ENCODE measurements at regions of chr14 and their contacts with region 1.

Region 1: DNA sequence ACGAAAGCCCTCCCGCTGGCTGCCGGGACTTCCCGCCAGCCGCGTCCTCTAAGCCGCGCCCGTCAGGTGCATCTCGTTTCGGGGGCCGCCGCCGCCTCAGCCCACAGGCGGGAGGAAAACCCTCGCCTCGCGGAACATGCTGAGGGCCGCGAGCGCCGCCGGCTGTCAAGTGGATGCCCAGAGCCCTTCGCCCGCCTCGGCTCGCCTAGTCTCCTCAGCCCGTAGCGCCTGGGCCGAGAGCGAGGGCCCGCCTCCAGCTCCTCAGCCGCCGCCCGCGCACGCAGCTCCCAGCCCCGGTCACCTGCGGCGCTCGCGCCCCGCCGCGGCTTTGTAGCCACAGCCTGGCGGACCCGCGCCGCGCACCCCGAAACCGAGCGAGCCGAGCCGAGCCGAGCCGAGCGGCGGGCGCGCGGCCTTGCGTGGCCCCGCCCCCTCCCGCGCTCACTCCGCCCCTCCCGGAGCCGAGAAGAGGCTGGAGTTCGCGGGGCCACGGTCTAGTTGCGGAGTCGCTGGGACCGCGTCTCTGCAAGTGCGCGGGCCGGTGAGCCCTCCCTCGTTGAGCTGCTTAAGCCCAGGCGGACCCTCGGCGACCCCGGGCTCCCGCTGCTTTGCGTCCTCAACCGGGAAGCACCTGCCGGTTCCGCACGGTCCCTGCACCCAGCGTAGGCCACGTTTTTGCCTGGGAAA is at the start of gene EML5:
- DNase-seq: peak; percentile 78 to 89 (median 86)
- ATAC-seq: peak; percentile 93
- H3K4me3 ChIP-seq: peak within 1 kb of the TSS; percentile 87
- H3K4me3 Mint-ChIP-seq: peak within 1 kb of the TSS; percentile 83 to 93 (median 91)
- H3K27ac ChIP-seq: peak within 1 kb of the TSS; percentile 78
- H3K27ac Mint-ChIP-seq: peak within 1 kb of the TSS; percentile 42 to 94 (median 77)
- H3K4me1 ChIP-seq: peaks cover 7 to 10% of the 10 kb centered on the region in 2 donors
- H3K4me1 Mint-ChIP-seq: peaks cover 8 to 29% (median 19%) of the 10 kb centered on the region in 7 donors
- H3K27me3 ChIP-seq: no peaks in the 10 kb centered on the region
- H3K27me3 Mint-ChIP-seq: peaks cover 0 to 36% (median 0%) of the 10 kb centered on the region in 5 donors
- total RNA-seq, gene EML5: 1.3 to 6.4 (median 5.4) TPM

Region 2: GRCh38 chr14:88060576-88060975 is 732.1 kb before region 1 on chr14:
- CTCF ChIA-PET with region 1: no interaction called
- POLR2A ChIA-PET with region 1: no interaction called
- intact Hi-C with region 1: no loop called
- DNase-seq: no peak
- ATAC-seq: no peak
- H3K4me3 ChIP-seq: no peak overlapping the region
- H3K4me3 Mint-ChIP-seq: no peak overlapping the region
- H3K27ac ChIP-seq: no peak overlapping the region
- H3K27ac Mint-ChIP-seq: no peak overlapping the region
- H3K4me1 ChIP-seq: no peaks in the 10 kb centered on the region
- H3K4me1 Mint-ChIP-seq: no peaks in the 10 kb centered on the region
- H3K27me3 ChIP-seq: no peaks in the 10 kb centered on the region
- H3K27me3 Mint-ChIP-seq: peaks cover 6 to 10% (median 8%) of the 10 kb centered on the region in 5 donors

Region 3: GRCh38 chr14:88492272-88493089 is 300.2 kb before region 1 on chr14:
- CTCF ChIA-PET with region 1: no interaction called
- POLR2A ChIA-PET with region 1: no interaction called
- intact Hi-C with region 1: loop called in 1 of 2 experiments (anchors 2 kb)
- DNase-seq: peak in 8 of 9 donors; percentile 36 to 73 (median 58)
- ATAC-seq: peak; percentile 90
- H3K4me3 ChIP-seq: no peak overlapping the region
- H3K4me3 Mint-ChIP-seq: no peak overlapping the region
- H3K27ac ChIP-seq: no peak overlapping the region
- H3K27ac Mint-ChIP-seq: no peak overlapping the region
- H3K4me1 ChIP-seq: no peaks in the 10 kb centered on the region
- H3K4me1 Mint-ChIP-seq: peaks cover 0 to 7% (median 0%) of the 10 kb centered on the region in 7 donors
- H3K27me3 ChIP-seq: no peaks in the 10 kb centered on the region
- H3K27me3 Mint-ChIP-seq: peaks cover 0 to 6% (median 4%) of the 10 kb centered on the region in 5 donors

Region 4: DNA sequence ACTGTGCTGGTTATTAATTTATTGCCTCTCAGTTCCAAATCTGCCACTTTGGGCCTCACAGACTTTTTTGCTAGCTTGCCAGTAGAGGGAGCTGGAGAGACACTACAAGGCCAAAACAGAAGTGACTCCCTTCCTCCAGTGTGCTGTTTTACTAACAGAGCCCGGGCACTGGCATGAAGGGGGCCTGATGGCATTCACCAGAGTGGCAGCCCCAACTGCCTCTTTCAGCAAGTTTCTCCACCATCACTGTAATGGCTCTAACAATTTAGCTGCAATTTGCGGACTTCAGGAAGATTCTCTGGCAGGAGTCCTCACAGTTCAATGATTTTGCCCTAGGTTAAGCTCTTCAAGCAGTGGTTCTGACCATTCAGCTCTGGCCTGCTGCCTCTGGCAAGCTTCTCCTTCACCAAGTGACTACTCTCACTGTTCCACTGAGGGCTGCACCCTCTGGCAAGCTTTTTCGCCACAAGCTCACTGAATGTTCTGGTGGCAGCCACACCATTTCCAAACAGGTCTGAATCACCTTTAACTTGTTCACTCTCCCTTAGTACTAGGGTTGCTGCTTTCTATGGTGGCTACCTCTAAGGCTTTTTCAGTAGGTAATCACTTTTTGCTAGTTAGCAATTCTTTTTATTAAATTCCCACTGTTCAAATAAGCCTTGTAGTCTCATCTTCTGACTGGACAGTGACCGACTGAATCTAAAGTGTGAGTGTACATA is 125.0 kb before region 1 on chr14:
- CTCF ChIA-PET with region 1: no interaction called
- POLR2A ChIA-PET with region 1: no interaction called
- intact Hi-C with region 1: loop called in 1 of 2 experiments (anchors 1 kb)
- DNase-seq: peak in 8 of 9 donors; percentile 26 to 71 (median 60)
- ATAC-seq: peak; percentile 78
- H3K4me3 ChIP-seq: no peak overlapping the region
- H3K4me3 Mint-ChIP-seq: no peak overlapping the region
- H3K27ac ChIP-seq: no peak overlapping the region
- H3K27ac Mint-ChIP-seq: no peak overlapping the region
- H3K4me1 ChIP-seq: no peaks in the 10 kb centered on the region
- H3K4me1 Mint-ChIP-seq: peaks cover 0 to 7% (median 0%) of the 10 kb centered on the region in 7 donors
- H3K27me3 ChIP-seq: no peaks in the 10 kb centered on the region
- H3K27me3 Mint-ChIP-seq: no peaks in the 10 kb centered on the region

Region 5: GRCh38 chr14:89303457-89304435 is 511.0 kb after region 1 on chr14:
- CTCF ChIA-PET with region 1: no interaction called
- POLR2A ChIA-PET with region 1: no interaction called
- intact Hi-C with region 1: no loop called
- DNase-seq: peak in 8 of 9 donors; percentile 21 to 63 (median 45)
- ATAC-seq: peak; percentile 76
- H3K4me3 ChIP-seq: no peak overlapping the region
- H3K4me3 Mint-ChIP-seq: peak overlapping the region; percentile 63 to 83 (median 73)
- H3K27ac ChIP-seq: peak overlapping the region; percentile 11
- H3K27ac Mint-ChIP-seq: peak overlapping the region; percentile 76 to 95 (median 84)
- H3K4me1 ChIP-seq: peaks cover 0 to 20% of the 10 kb centered on the region in 2 donors
- H3K4me1 Mint-ChIP-seq: peaks cover 38 to 82% (median 78%) of the 10 kb centered on the region in 7 donors
- H3K27me3 ChIP-seq: no peaks in the 10 kb centered on the region
- H3K27me3 Mint-ChIP-seq: no peaks in the 10 kb centered on the region

Region 6: GRCh38 chr14:89959853-89960445 is 1167.2 kb after region 1 on chr14:
- CTCF ChIA-PET with region 1: no interaction called
- POLR2A ChIA-PET with region 1: interaction called, 3 read pairs
- intact Hi-C with region 1: loop called (anchors 2 to 10 kb)
- DNase-seq: peak in 7 of 9 donors; percentile 31 to 61 (median 44)
- ATAC-seq: peak; percentile 8
- H3K4me3 ChIP-seq: no peak overlapping the region
- H3K4me3 Mint-ChIP-seq: peak overlapping the region; percentile 5 to 79 (median 68)
- H3K27ac ChIP-seq: peak overlapping the region; percentile 47
- H3K27ac Mint-ChIP-seq: peak overlapping the region; percentile 23 to 92 (median 77)
- H3K4me1 ChIP-seq: peaks cover 35 to 45% of the 10 kb centered on the region in 2 donors
- H3K4me1 Mint-ChIP-seq: peaks cover 42 to 81% (median 78%) of the 10 kb centered on the region in 7 donors
- H3K27me3 ChIP-seq: no peaks in the 10 kb centered on the region
- H3K27me3 Mint-ChIP-seq: no peaks in the 10 kb centered on the region